ENCODE measurements at regions of chr7 and their contacts with region 1.

Region 1: GRCh38 chr7:81715984-81716588 is 53.8 kb downstream of the HGF start:
- DNase-seq: peak in 1 of 2 donors; percentile 4
- ATAC-seq: no peak
- H3K4me3 ChIP-seq: no peak overlapping the region
- H3K27ac ChIP-seq: no peak overlapping the region
- H3K4me1 ChIP-seq: no peaks in the 10 kb centered on the region
- H3K27me3 ChIP-seq: no peaks in the 10 kb centered on the region
- CTCF ChIP-seq: peak in 6 of 9 donors; percentile 8 to 51 (median 24)

Region 2: DNA sequence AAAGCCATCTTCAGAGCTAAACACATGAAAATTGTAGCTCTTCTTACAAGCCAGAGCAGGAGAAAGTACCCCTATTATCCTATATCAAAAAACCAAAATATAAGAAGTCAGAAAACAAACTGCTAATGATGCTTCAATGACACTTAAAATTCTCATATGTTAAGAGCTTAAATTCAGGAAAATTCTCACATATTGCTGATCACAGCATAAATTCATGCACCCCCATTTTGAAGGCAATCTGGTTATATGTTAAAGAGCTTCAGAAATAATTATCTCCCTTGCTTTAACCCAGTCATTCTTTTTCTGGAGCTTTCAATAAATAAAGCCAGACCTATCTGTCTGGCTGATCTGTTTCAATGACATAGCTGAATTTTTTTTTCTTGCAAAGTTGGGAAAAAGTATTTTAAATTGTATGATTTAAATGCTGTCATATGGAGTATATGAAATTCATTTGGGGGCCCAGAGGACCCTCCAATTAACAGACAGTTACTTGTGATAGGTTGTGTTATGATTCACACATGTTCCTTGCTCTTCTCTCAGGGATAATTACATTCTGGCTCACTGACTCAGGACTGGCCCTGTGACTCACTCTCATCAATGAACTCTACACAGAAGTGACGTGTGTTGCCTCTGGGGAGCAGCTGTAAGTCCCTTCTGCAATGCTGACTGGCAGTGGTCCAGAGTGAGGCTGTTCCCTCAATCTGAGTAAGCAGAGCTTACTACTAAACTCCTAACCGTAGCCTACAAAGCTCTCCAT is 31.4 kb before region 1 on chr7:
- intact Hi-C with region 1: loop called in 1 of 10 experiments (anchors 1 kb)
- DNase-seq: peak; percentile 77 to 91
- ATAC-seq: peak; percentile 94 to 100 (median 97)
- H3K4me3 ChIP-seq: no peak overlapping the region
- H3K27ac ChIP-seq: peak overlapping the region in 6 of 10 donors; percentile 6 to 53 (median 28)
- H3K4me1 ChIP-seq: peaks cover 0 to 11% (median 0%) of the 10 kb centered on the region in 9 donors
- H3K27me3 ChIP-seq: no peaks in the 10 kb centered on the region
- CTCF ChIP-seq: no peak

Region 3: GRCh38 chr7:81752318-81752714 is 36.2 kb after region 1 on chr7:
- intact Hi-C with region 1: loop called in 1 of 10 experiments (anchors 5 kb)
- DNase-seq: no peak
- ATAC-seq: no peak
- H3K4me3 ChIP-seq: no peak overlapping the region
- H3K27ac ChIP-seq: no peak overlapping the region
- H3K4me1 ChIP-seq: no peaks in the 10 kb centered on the region
- H3K27me3 ChIP-seq: no peaks in the 10 kb centered on the region
- CTCF ChIP-seq: no peak